Thyroid gland (tissue), 4 donors: ENCODE measurements at regions of chr17 and their contacts with region 1.

Region 1: DNA sequence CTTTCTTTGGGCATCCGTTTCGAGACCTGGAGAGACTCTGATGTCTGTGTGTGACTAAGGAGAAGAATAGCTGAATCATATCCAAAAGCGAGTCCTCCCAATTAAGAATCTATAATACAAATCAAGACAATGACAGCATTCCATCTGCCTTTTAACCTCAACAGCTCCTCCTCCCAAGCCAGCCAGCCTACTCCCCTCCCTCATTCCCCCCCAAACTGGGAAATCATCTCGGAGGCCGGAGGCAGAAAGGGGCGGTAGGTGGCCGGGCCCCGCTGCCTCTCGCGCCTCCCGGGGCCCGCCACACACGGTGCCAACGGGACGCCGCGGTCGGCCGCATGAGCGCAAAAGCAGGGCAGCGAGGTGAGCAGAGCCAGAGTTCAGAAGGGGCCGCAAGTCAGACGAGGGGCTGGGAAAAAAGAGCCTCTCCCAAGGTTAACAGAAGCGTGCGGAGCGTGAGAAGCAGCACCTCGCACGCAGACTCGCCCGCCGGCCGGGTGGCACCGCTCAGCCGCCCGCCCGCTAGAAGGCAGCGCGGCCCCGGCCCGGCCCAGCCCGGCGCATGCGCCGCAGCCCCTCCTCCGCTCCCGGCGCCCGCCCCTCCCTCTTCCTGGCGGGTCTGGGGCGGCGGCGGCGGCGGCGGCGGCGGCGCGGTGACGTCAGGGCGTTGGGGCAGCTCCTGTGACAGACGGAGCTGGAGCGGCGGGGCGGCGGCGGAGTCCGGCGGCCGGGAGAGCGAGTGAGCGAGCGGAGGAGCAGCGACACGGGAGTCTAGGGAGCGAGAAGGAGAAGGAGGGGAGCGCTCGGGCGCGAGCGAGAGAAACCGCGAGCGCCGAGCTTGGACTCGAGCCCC is at the start of gene PAFAH1B1:
- DNase-seq: peak; percentile 92
- H3K4me3 ChIP-seq: peak within 1 kb of the TSS; percentile 93 to 98 (median 94)
- H3K27ac ChIP-seq: peak within 1 kb of the TSS; percentile 94 to 99 (median 99)
- H3K4me1 ChIP-seq: peaks cover 29 to 31% of the 10 kb centered on the region in 2 donors
- H3K27me3 ChIP-seq: no peaks in the 10 kb centered on the region
- CTCF ChIP-seq: peak in 3 of 6 experiments; percentile 18 to 36 (median 34)
- POLR2A ChIP-seq: peak; percentile 83 to 94
- total RNA-seq, gene PAFAH1B1: 102 to 184 (median 109) TPM

Region 2: GRCh38 chr17:2401426-2402221 is 191.6 kb before region 1 on chr17:
- intact Hi-C with region 1: no loop called
- DNase-seq: peak; percentile 100
- H3K4me3 ChIP-seq: peak overlapping the region; percentile 34 to 95 (median 43)
- H3K27ac ChIP-seq: peak overlapping the region; percentile 92 to 98 (median 95)
- H3K4me1 ChIP-seq: peaks cover 29 to 63% of the 10 kb centered on the region in 2 donors
- H3K27me3 ChIP-seq: no peaks in the 10 kb centered on the region
- CTCF ChIP-seq: peak in 1 of 6 experiments; percentile 38
- POLR2A ChIP-seq: no peak

Region 3: GRCh38 chr17:2449486-2449885 is 143.7 kb before region 1 on chr17:
- intact Hi-C with region 1: no loop called
- DNase-seq: no peak
- H3K4me3 ChIP-seq: no peak overlapping the region
- H3K27ac ChIP-seq: no peak overlapping the region
- H3K4me1 ChIP-seq: no peaks in the 10 kb centered on the region
- H3K27me3 ChIP-seq: no peaks in the 10 kb centered on the region
- CTCF ChIP-seq: no peak
- POLR2A ChIP-seq: no peak

Region 4: GRCh38 chr17:2689411-2690164 is 96.4 kb after region 1 on chr17:
- intact Hi-C with region 1: loop called (anchors 10 kb)
- DNase-seq: no peak
- H3K4me3 ChIP-seq: no peak overlapping the region
- H3K27ac ChIP-seq: peak overlapping the region; percentile 95 to 99 (median 97)
- H3K4me1 ChIP-seq: peaks cover 40 to 47% of the 10 kb centered on the region in 2 donors
- H3K27me3 ChIP-seq: no peaks in the 10 kb centered on the region
- CTCF ChIP-seq: no peak
- POLR2A ChIP-seq: no peak